Activated T-helper 1 cell treated with anti-CD3 and anti-CD28 coated beads, Interleukin-12 subunit alpha, Interleukin-12 subunit beta, Interleukin-2, Interleukin-4 antibody, amounts not matched to agents 30 ng/mL and 10 ng/mL and 1 ng/mL, durations not matched to agents 14 hours and 24 hours and 36 hours (primary cell): ENCODE measurements at regions of chr2 and their contacts with region 1.

Region 1: GRCh38 chr2:224971208-224971607 is 71.1 kb downstream of the DOCK10 start:
- DNase-seq: no peak
- H3K4me3 Mint-ChIP-seq: no peak overlapping the region
- H3K27ac Mint-ChIP-seq: peak overlapping the region; percentile 29
- H3K4me1 Mint-ChIP-seq: peaks cover 72% of the 10 kb centered on the region
- H3K27me3 Mint-ChIP-seq: no peaks in the 10 kb centered on the region

Region 2: DNA sequence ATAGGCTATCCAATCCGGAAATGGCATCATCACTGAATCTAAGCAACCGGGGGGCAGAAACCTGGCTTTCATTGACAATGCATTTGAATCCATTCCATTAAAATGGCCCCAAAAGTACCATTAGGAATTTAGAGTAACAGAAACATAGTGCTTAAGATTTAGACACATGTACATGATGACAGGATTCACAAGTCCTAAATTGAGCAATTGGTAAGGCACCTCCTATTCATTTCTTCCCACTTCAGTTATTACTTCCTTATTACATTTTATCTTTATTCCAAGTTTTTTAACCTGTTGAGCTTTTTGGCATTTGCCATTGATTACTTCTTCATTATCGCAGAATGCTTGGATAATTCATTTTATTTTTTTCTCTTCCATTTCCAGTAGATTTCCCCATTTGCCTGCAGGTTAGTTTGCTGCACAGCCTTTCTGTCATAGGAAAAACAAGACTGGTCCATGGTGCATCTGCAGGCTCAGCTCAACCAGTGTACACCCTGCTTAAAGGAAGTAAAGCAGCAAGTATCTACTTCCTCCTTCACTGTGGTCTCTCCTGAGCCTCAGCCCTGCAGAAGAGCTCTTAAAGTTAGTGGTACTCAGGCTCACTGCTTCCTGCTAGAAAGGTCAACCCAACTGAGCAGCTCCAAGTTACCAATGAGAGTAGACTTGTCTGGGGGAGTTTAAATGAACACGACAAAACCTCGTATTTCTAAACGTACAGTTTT is 18.1 kb before region 1 on chr2:
- intact Hi-C with region 1: loop called (anchors 1 kb)
- DNase-seq: peak; percentile 34
- H3K4me3 Mint-ChIP-seq: peak overlapping the region; percentile 62
- H3K27ac Mint-ChIP-seq: peak overlapping the region; percentile 87
- H3K4me1 Mint-ChIP-seq: peaks cover 92% of the 10 kb centered on the region
- H3K27me3 Mint-ChIP-seq: no peaks in the 10 kb centered on the region

Region 3: DNA sequence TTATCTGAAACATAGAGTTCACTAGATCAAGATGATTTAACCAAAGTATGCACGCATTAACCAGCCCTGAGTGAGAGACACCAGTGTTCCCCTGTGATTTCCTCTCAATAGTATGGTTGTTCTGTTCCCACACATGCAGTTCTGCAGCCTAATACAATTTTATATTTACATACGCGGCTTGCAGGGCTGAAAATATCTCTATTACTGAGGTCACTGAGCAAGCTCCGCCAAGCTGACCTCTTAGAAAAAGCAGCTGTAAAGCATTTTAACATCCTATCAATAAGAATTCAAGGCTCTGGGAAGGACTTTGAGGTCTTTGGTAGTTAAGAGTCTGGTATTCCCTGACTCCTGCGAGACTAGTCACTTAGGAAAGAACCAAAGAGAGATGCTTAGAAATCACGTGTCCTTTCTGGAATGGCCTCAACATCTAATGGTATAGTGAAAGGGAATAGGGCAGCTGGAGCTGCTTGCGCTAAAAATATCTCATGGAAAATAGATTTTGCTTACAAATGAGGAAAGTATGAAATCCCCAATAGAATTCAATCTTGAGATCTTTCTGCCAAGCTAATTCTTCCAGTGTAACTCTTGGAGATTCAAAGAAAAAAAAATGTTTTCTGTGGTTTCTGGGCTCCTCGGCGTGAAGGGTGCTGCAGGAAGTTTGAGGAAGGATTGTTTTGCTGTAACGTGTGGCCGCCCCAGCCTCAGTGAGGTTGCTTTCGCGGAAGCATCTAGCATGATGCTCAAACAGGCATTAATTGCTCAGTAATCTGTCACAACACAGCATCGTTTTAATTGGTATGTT is 11.9 kb after region 1 on chr2:
- intact Hi-C with region 1: loop called (anchors 2 kb)
- DNase-seq: peak; percentile 45
- H3K4me3 Mint-ChIP-seq: peak overlapping the region; percentile 80
- H3K27ac Mint-ChIP-seq: peak overlapping the region; percentile 96
- H3K4me1 Mint-ChIP-seq: peaks cover 86% of the 10 kb centered on the region
- H3K27me3 Mint-ChIP-seq: no peaks in the 10 kb centered on the region

Region 4: GRCh38 chr2:225037415-225038230 is 66.4 kb after region 1 on chr2:
- intact Hi-C with region 1: no loop called
- DNase-seq: no peak
- H3K4me3 Mint-ChIP-seq: peak overlapping the region; percentile 96
- H3K27ac Mint-ChIP-seq: peak overlapping the region; percentile 92
- H3K4me1 Mint-ChIP-seq: peaks cover 79% of the 10 kb centered on the region
- H3K27me3 Mint-ChIP-seq: no peaks in the 10 kb centered on the region